HepG2 (cell line): ENCODE measurements at regions of chrX and their contacts with region 1.

Region 1: DNA sequence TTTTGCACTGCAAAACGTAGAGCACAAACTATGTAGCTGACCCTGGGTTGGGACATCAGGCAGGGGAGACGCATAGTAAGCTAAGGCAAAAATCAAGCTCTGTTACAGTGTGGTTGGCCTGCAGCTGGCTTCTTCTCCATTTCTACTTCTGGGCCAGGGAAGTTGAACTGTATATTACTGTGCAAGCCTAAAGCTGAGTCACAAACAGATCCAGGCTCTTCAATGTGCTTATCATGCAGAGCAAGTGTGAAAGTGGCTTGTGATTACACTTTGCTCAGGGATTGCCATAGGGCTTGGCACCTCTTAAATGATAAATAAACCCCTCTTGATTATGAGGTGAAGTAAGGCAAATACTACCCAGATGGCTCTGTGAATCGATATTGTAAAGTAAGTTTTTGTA is 40.5 kb downstream of the CLDN34 start:
- DNase-seq: no peak
- ATAC-seq: peak; percentile 32
- H3K4me3 ChIP-seq: no peak overlapping the region
- H3K27ac ChIP-seq: no peak overlapping the region
- H3K4me1 ChIP-seq: peaks cover 75% of the 10 kb centered on the region
- H3K27me3 ChIP-seq: no peaks in the 10 kb centered on the region
- CTCF ChIP-seq: no peak
- EP300 ChIP-seq: no peak
- POLR2A ChIP-seq: no peak
- RAD21 ChIP-seq: no peak

Region 2: DNA sequence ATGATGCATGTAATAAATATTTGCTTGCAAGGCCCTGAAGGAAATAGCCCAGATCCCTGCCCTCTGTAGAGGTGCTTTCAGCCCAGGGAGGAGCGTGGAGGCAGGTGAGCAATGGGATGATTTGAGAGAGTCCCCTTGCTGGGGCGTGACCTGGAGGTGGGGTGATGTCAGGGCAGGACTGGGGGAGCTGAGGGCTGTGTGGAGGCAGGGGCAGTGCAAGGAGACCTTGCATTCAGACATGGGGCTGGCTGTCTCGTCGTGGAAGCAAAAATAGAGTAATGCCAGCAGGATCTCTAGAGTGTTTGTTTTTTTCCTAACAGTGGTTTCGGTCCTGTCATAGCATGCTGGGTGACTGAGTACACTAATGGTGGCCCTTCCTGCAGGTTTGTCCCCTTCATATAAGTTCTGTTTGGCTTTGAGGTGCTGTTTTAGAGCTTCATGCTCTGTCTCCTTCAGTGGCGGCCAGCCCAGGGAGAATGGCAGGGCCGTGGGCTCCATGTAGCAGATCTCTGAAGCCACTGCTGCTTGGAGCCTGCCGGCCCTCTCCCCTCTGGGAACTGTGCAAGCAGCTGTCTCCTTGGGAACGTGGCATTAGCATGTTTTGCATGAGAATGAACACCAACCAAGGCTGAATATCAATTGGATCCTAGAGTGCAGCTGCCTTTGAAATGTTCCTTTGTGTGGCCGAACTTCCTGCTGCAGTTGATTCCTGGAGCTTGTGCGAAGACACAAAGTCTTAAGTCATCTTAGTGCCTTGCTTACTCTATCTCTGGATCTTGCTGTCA is 79.7 kb before region 1 on chrX:
- CTCF ChIA-PET with region 1: no interaction called
- POLR2A ChIA-PET with region 1: no interaction called
- in situ Hi-C with region 1: no loop called
- intact Hi-C with region 1: no loop called
- DNase-seq: no peak
- ATAC-seq: no peak
- H3K4me3 ChIP-seq: no peak overlapping the region
- H3K27ac ChIP-seq: no peak overlapping the region
- H3K4me1 ChIP-seq: peaks cover 1% of the 10 kb centered on the region
- H3K27me3 ChIP-seq: no peaks in the 10 kb centered on the region
- CTCF ChIP-seq: no peak
- EP300 ChIP-seq: no peak
- POLR2A ChIP-seq: no peak
- RAD21 ChIP-seq: no peak

Region 3: GRCh38 chrX:10103023-10103422 is 95.4 kb after region 1 on chrX:
- CTCF ChIA-PET with region 1: no interaction called
- POLR2A ChIA-PET with region 1: no interaction called
- in situ Hi-C with region 1: no loop called
- intact Hi-C with region 1: loop called (anchors 2 kb)
- DNase-seq: no peak
- ATAC-seq: no peak
- H3K4me3 ChIP-seq: no peak overlapping the region
- H3K27ac ChIP-seq: no peak overlapping the region
- H3K4me1 ChIP-seq: peaks cover 24% of the 10 kb centered on the region
- H3K27me3 ChIP-seq: no peaks in the 10 kb centered on the region
- CTCF ChIP-seq: no peak
- EP300 ChIP-seq: no peak
- POLR2A ChIP-seq: no peak
- RAD21 ChIP-seq: no peak